ENCODE measurements at regions of chr4 and their contacts with region 1.

Region 1: GRCh38 chr4:1072830-1073446 is 40.4 kb downstream of the RNF212 start:
- DNase-seq: peak in 3 of 10 donors; percentile 26 to 57 (median 49)
- H3K4me3 ChIP-seq: no peak overlapping the region
- H3K27ac ChIP-seq: no peak overlapping the region
- H3K27me3 ChIP-seq: peaks cover 0 to 3% (median 0%) of the 10 kb centered on the region in 45 donors
- CTCF ChIP-seq: peak in 54 of 56 donors; percentile 26 to 69 (median 57)

Region 2: GRCh38 chr4:2339458-2340271 is 1266.7 kb after region 1 on chr4:
- intact Hi-C with region 1: loop called in 1 of 2 experiments (anchors 10 kb)
- DNase-seq: peak in 5 of 10 donors; percentile 5 to 76 (median 36)
- H3K4me3 ChIP-seq: no peak overlapping the region
- H3K27ac ChIP-seq: peak overlapping the region in 1 of 59 donors; percentile 85
- H3K27me3 ChIP-seq: no peaks in the 10 kb centered on the region
- CTCF ChIP-seq: no peak